WTC11 (cell line): ENCODE measurements at regions of chr13 and their contacts with region 1.

Region 1: DNA sequence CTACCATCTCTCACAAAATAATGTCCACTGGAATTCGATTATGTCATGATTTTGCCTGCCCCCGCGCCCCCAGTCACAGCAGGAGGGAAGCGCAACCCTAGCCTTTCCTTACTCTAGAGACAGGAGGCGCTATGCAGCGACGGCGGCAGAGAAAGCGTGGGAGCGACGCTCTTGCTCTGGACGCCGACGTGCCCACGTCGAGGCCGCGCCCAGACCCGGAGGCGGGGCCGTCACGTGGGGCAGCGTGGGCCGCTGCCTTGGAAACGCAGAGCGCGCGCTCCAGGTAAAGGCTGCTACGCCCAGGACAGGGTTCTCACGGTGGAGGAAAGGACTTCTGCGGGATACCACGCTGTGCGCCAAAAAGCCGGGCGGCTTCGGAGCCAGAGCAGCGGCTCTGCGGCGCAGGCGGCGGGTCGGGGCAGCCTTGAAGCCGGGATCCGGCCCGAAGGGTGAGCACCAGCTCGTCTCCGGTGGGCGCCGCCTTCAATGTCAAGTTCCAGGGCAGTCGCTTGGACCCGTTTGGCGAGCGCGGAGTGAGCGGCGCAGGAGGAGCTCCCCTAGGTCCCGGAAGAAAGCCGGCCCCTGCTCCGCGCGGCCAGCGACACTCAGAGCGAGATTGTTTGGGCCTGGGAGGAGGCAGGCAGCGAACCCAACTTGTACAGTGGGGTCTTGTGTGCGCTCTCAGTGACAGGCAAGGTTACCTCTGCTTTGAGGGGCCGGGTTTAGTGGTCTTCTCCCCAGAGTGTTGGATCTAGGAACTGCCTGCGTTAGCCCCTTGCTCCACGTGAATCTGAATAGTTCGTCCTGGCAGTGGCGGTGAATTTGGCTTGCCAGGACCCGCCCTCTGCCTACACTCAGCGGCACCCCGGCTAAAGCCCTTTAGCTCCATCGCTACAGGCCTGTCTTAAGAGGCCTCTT is 121.7 kb downstream of the MRPL57 start:
- DNase-seq: peak; percentile 86
- ATAC-seq: peak; percentile 88
- H3K4me3 Mint-ChIP-seq: peak overlapping the region; percentile 92
- H3K27ac Mint-ChIP-seq: peak overlapping the region; percentile 93
- H3K4me1 Mint-ChIP-seq: peaks cover 26% of the 10 kb centered on the region
- H3K27me3 Mint-ChIP-seq: no peaks in the 10 kb centered on the region
- CTCF ChIP-seq: peak; percentile 67

Region 2: DNA sequence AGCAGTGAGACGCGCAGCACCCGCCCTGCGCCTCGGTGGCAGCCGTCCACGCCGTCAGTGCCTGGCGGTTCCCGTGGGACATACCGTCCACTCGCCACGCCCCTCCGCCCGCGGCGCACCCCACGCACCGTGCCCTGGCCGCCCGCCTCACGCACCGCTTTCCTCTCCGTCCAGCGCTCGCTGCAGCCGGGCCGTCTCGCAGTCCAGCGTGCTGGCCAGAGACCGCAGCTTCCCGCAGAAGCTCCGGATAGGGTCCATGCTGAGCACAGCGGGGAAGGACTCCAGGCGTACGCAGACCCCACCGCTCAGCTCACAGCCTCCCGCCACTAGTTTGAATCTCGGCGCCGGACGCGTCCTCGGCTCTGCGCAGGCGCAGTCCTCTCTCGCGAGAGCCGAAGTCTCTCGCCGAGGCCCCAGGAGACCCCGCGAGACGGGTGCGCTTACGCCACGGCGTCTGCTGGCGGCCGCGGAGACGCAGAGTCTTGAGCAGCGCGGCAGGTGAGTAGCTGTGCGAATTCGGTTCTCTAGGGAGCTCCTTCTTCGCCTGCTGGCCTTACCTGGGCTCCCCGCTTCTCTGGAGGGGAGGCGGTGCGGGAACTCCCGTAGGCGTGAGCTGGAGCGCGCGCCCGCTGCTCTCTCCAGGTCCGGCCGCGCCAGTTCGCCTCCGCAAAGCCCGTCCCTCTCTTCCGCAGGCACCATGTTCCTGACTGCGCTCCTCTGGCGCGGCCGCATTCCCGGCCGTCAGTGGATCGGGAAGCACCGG is 121.8 kb before region 1 on chr13 and contains the starts of genes MRPL57 and SKA3:
- CTCF ChIA-PET with region 1: interaction called, 15 read pairs
- POLR2A ChIA-PET with region 1: interaction called, 5 read pairs
- DNase-seq: peak; percentile 96
- ATAC-seq: peak; percentile 90
- H3K4me3 Mint-ChIP-seq: peak within 1 kb of the TSS; percentile 95
- H3K27ac Mint-ChIP-seq: peak within 1 kb of the TSS; percentile 98
- H3K4me1 Mint-ChIP-seq: peaks cover 41% of the 10 kb centered on the region
- H3K27me3 Mint-ChIP-seq: no peaks in the 10 kb centered on the region
- CTCF ChIP-seq: no peak
- total RNA-seq, gene MRPL57: 29.4 to 32.3 TPM (median 32.1 TPM) in 3 replicates
- total RNA-seq, gene SKA3: 38.8 to 45.7 TPM (median 42.1 TPM) in 3 replicates

Region 3: GRCh38 chr13:21318891-21319532 is 20.8 kb after region 1 on chr13:
- CTCF ChIA-PET with region 1: interaction called, 13 read pairs
- POLR2A ChIA-PET with region 1: no interaction called
- DNase-seq: no peak
- ATAC-seq: peak; percentile 50
- H3K4me3 Mint-ChIP-seq: peak overlapping the region; percentile 29; the same call in 1 of the 2 replicates
- H3K27ac Mint-ChIP-seq: no peak overlapping the region
- H3K4me1 Mint-ChIP-seq: peaks cover 11% of the 10 kb centered on the region
- H3K27me3 Mint-ChIP-seq: peaks cover under 1% of the 10 kb centered on the region
- CTCF ChIP-seq: no peak

Region 4: DNA sequence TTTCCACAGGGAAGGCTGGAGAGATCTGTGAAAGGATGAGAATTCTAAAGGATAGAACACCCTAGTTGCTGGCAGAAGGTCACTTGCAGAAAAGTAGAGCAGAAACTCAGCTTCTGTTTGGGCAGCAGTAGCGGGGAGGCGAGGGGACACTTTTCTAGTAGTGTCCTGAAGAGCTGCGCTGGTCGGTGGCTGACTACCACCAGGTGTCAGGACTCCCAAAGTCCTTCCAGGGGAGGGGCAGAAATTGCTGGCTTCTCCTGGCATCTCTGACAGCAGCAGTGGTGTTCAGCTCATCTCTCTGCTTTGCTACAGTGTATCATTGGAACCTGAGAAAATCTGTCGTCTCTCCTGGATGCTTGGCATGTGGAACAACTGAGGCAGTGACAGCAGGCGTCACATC is 40.0 kb after region 1 on chr13:
- CTCF ChIA-PET with region 1: interaction called, 17 read pairs
- POLR2A ChIA-PET with region 1: interaction called, 3 read pairs
- DNase-seq: no peak
- ATAC-seq: peak; percentile 65
- H3K4me3 Mint-ChIP-seq: no peak overlapping the region
- H3K27ac Mint-ChIP-seq: no peak overlapping the region
- H3K4me1 Mint-ChIP-seq: peaks cover 41% of the 10 kb centered on the region
- H3K27me3 Mint-ChIP-seq: no peaks in the 10 kb centered on the region; the same call in 1 of the 2 replicates
- CTCF ChIP-seq: no peak

Region 5: DNA sequence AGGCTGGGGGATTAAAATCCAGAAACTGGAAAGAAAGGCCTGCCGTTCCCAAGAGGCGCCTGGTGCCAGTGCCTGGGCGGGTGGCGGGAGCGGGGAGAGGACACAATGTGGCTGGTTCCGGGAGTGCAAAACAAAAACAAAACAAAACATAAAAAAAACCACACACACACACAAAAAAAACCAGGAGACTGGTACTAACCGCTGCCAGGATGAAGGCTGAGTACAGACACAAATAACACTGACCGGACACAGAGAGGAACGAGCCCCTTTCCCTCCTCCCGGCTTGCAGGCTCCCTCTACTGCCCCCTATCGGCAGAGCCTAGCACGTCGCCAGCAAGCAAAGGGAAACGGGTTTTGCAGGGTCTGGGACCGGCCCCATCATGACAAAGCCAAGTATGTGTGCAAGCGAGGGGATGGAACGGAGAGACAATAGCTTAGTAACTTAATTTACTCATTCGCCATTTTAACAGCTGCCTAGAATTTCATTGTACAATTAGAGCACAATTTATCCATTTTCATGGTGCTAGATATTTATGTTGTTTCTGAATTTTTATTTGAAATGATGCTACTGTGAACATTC is 178.8 kb after region 1 on chr13:
- CTCF ChIA-PET with region 1: interaction called, 69 read pairs
- POLR2A ChIA-PET with region 1: interaction called, 3 read pairs
- DNase-seq: peak; percentile 93
- ATAC-seq: peak; percentile 89
- H3K4me3 Mint-ChIP-seq: peak overlapping the region; percentile 70
- H3K27ac Mint-ChIP-seq: peak overlapping the region; percentile 52; the same call in 1 of the 2 replicates
- H3K4me1 Mint-ChIP-seq: peaks cover 4% of the 10 kb centered on the region
- H3K27me3 Mint-ChIP-seq: no peaks in the 10 kb centered on the region
- CTCF ChIP-seq: peak; percentile 96